ENCODE measurements at regions of chr2 and their contacts with region 1.

Region 1: DNA sequence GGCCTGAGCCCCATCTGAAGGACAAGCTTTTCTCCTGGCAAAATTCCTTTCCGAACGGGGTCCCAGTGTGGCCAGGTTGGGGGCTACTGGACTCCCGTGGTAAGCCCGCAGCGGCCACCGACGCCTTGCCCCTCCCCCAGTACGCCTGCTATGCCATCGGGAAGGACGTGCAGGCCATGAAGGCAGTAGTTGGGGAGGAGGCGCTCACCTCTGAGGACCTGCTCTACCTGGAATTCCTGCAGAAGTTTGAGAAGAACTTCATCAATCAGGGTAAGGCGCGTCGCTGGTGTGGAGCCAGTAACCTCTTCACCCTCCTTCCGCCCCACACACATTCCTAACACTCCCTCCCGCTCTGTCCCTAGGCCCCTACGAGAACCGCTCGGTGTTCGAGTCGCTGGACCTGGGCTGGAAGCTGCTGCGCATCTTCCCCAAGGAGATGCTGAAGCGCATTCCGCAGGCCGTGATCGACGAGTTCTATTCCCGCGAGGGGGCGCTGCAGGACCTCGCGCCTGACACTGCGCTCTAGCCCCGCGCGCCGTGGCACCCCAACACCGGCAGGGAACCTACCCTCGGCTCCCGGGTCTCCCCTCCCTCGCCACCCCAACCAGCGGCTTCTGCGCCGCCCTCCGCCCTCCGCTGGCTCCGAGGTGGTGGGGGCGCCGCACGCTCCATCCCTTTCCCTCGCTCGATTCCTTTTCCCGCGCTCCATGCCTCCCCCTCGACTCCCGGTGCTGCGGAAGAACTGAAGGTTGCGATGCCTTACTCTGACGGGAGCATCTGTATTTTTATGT is 13.6 kb upstream of the ANKRD53 start:
- DNase-seq: peak; percentile 87
- H3K4me3 Mint-ChIP-seq: peak overlapping the region; percentile 76
- H3K27ac Mint-ChIP-seq: no peak overlapping the region
- H3K4me1 Mint-ChIP-seq: peaks cover 3% of the 10 kb centered on the region
- H3K27me3 Mint-ChIP-seq: peaks cover 16% of the 10 kb centered on the region

Region 2: DNA sequence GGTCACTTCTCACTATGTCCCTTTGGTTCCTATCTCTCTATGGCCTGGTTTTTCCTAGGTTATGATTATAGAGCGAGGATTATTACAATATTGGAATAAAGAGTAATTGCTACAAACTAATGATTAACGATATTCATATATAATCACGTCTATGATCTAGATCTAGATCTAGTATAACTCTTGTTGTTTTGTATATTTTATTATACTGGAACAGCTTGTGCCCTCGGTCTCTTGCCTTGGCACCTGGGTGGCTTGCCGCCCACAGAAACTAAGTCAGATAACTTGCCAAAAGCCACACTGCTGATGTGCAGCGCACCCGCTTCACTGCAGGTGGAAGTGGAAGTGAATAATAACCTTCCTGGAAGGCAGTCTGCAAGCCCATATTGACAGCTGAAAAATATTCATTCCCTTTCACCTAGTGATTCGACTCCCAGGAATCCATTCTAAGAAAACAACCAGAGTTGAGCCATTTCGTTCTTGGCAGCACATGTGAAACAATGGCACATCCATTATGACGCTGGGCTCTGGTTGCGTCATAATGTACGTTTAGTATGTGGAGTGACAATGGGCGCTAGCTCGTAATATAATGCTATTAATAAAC is 12.9 kb after region 1 on chr2:
- CTCF ChIA-PET with region 1: interaction called, 54 read pairs
- POLR2A ChIA-PET with region 1: interaction called, 4 read pairs
- intact Hi-C with region 1: loop called (anchors 1 kb)
- DNase-seq: peak; percentile 66
- H3K4me3 Mint-ChIP-seq: peak overlapping the region; percentile 64
- H3K27ac Mint-ChIP-seq: peak overlapping the region; percentile 59
- H3K4me1 Mint-ChIP-seq: peaks cover 13% of the 10 kb centered on the region
- H3K27me3 Mint-ChIP-seq: no peaks in the 10 kb centered on the region

Region 3: GRCh38 chr2:70984576-70985282 is 19.9 kb after region 1 on chr2:
- CTCF ChIA-PET with region 1: interaction called, 54 read pairs
- POLR2A ChIA-PET with region 1: no interaction called
- intact Hi-C with region 1: loop called (anchors 2 kb)
- DNase-seq: peak; percentile 87
- H3K4me3 Mint-ChIP-seq: no peak overlapping the region
- H3K27ac Mint-ChIP-seq: no peak overlapping the region
- H3K4me1 Mint-ChIP-seq: peaks cover 12% of the 10 kb centered on the region
- H3K27me3 Mint-ChIP-seq: no peaks in the 10 kb centered on the region

Region 4: DNA sequence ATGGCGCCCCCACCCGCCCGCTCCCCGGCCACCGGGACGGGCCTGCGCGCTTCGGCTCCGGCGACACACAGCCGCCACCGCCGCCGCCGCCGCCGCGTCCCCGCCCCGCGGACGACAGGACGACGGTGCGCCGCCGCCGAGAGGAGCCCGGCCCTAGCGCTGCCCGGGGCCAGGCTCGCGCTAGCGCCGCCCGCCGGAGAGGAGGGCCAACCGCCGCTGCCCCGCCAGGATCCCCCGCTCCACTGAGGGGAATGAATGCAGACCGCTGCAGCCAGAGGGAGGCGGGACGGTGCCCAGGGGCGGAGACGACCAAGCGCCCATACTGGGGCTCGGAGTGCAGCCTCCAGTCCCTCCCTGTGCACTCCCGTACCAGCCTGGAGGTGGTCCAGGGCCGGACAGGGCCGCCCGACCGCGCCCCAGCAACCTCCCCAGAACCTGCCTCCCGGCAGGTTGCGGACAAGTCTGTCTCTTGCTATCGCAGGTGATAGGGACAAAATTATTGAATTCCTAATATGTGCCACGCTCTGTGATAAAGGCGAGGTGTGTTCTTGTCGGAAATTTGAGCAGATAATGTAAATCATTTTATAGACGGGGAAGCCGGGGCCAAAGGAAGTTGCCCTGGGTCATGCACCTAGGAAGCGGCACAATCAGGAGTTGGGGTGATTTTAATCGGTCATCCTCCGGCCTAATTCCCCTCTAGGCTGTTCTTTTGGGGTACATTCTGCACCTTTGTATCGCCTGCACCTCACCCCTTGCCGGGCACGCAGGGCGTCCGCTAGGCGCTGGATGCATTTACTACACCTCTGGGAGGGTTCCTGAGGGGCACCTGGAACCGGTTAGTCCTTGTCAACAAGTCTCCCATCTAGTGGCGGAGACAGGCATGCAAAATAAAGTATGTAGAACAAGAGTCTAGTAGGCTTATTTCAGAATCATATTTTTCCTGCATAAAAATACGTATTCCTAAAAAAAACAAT is 30.3 kb after region 1 on chr2 and contains the start of gene TEX261:
- CTCF ChIA-PET with region 1: interaction called, 64 read pairs
- POLR2A ChIA-PET with region 1: no interaction called
- intact Hi-C with region 1: loop called (anchors 1 kb)
- DNase-seq: peak; percentile 94
- H3K4me3 Mint-ChIP-seq: peak within 1 kb of the TSS; percentile 93
- H3K27ac Mint-ChIP-seq: peak within 1 kb of the TSS; percentile 91
- H3K4me1 Mint-ChIP-seq: peaks cover 31% of the 10 kb centered on the region
- H3K27me3 Mint-ChIP-seq: no peaks in the 10 kb centered on the region
- total RNA-seq, gene TEX261: 29.0 to 29.9 TPM

Region 5: DNA sequence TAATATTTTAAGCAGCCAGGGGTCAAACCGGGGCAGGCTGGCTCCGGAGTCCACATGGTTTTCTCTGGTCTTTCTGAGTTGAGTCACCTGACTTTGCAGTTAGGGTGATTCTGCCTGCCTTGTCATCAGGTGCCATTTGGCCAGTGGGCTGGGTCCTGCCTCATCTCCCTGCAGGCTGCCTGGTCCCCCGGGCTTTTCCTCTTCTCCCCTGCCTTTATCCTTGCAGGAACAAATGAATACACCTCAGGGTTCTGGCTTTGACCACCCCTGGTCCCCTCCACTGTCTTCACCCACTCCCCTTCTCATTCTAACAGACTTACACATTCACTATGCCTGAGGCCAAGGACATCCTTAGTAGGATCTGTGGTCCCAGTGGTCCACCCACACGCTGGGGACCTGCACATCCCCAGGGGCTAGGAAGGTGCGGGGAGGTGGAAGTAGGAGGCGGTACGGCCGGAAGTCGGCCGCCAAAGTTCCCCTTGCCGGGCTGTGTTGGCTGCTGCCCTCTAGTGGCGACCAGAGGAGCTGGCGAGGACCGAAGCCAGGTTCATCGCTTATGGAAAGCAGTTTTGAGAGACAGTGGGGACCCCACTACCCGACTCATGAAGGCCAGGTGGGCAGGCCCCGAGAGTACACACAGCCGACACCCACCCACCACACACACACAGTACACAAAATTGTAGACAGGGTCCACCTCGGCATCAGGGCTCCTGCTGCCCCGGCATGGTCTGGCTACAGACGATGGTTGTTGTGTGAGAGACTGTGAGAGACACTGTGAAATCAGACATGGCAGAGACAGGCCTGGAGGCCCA is 36.2 kb after region 1 on chr2:
- CTCF ChIA-PET with region 1: interaction called, 64 read pairs
- POLR2A ChIA-PET with region 1: no interaction called
- intact Hi-C with region 1: loop called (anchors 1 kb)
- DNase-seq: peak; percentile 89
- H3K4me3 Mint-ChIP-seq: peak overlapping the region; percentile 72
- H3K27ac Mint-ChIP-seq: peak overlapping the region; percentile 74
- H3K4me1 Mint-ChIP-seq: peaks cover 7% of the 10 kb centered on the region
- H3K27me3 Mint-ChIP-seq: peaks cover 2% of the 10 kb centered on the region

Region 6: GRCh38 chr2:71157124-71157793 is 192.5 kb after region 1 on chr2:
- CTCF ChIA-PET with region 1: no interaction called
- POLR2A ChIA-PET with region 1: no interaction called
- intact Hi-C with region 1: no loop called
- DNase-seq: peak; percentile 66
- H3K4me3 Mint-ChIP-seq: no peak overlapping the region
- H3K27ac Mint-ChIP-seq: no peak overlapping the region
- H3K4me1 Mint-ChIP-seq: no peaks in the 10 kb centered on the region
- H3K27me3 Mint-ChIP-seq: peaks cover 5% of the 10 kb centered on the region

Measured in activated CD4-positive, alpha-beta memory T cell treated with anti-CD3 and anti-CD28 coated beads for 36 hours (primary cell).